Activated CD8-positive, alpha-beta T cell treated with anti-CD3 and anti-CD28 coated beads, Interleukin-2, amount 10 ng/mL, durations not matched to agents 7 days and 5 days (primary cell): ENCODE measurements at regions of chr14 and their contacts with region 1.

Region 1: DNA sequence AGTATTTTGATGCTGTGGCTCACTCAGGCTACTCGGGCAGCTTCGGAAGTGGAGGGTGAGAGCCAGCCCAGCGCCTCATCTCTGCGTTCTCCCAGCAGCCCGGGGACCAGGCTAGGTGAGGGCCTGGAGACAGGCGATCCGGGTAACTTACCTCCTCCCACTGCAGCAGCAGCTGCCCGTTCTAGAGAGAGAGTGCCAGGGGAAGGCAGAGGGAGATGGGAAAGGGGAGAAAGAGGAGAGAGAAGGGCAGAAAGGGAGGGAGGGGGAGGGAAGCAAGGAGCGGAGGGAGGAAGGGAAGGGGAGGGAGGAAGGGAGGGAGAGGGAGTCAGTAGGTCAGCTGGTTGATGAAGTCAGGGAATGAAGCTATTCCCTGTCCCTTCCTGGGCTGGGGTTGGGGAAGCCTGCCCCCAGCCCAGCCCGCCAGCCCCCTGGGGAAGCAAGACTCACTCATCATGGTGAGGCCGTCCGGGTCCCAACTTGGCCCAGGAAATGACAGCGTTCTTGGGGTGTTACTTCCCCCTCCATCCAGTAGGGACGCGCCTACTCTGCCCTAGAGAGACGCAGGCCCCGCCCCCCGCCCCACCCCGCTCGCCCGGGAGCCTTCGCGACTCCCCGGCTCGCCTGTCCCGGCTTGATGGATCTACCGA is at the start of gene IFI27L2:
- DNase-seq: peak; percentile 84
- ATAC-seq: peak; percentile 98
- H3K4me3 Mint-ChIP-seq: peak within 1 kb of the TSS; percentile 78
- H3K27ac Mint-ChIP-seq: peak within 1 kb of the TSS; percentile 88
- H3K4me1 Mint-ChIP-seq: peaks cover 17% of the 10 kb centered on the region
- H3K27me3 Mint-ChIP-seq: peaks cover 11% of the 10 kb centered on the region
- total RNA-seq, gene IFI27L2: 65.2 to 74.6 TPM

Region 2: DNA sequence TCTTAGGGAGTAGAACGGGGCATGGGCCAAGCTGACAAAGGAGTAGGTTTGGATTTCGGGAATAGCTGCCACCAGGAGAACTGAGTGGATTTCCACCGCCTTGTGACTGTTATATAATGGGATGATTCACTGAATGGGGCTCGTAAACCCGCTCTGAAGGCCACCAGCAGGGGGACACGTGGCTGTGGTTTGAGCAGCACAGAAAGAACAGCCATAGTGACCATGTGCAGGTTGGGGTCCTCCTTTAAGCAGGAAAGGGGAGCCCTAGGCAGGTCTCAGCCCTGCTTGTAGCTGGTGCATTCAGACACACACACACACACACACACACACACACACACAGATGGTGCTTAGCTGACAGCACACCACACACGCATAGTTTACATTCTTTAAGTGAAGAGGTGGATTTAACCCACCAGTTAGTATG is 144.2 kb before region 1 on chr14:
- CTCF ChIA-PET with region 1: no interaction called
- POLR2A ChIA-PET with region 1: no interaction called
- DNase-seq: no peak
- ATAC-seq: no peak
- H3K4me3 Mint-ChIP-seq: no peak overlapping the region
- H3K27ac Mint-ChIP-seq: no peak overlapping the region
- H3K4me1 Mint-ChIP-seq: peaks cover 13% of the 10 kb centered on the region
- H3K27me3 Mint-ChIP-seq: no peaks in the 10 kb centered on the region

Region 3: GRCh38 chr14:94051115-94051514 is 78.1 kb before region 1 on chr14:
- CTCF ChIA-PET with region 1: interaction called, 28 read pairs
- POLR2A ChIA-PET with region 1: no interaction called
- DNase-seq: no peak
- ATAC-seq: no peak
- H3K4me3 Mint-ChIP-seq: no peak overlapping the region
- H3K27ac Mint-ChIP-seq: peak overlapping the region; percentile 56
- H3K4me1 Mint-ChIP-seq: peaks cover 35% of the 10 kb centered on the region
- H3K27me3 Mint-ChIP-seq: no peaks in the 10 kb centered on the region

Region 4: DNA sequence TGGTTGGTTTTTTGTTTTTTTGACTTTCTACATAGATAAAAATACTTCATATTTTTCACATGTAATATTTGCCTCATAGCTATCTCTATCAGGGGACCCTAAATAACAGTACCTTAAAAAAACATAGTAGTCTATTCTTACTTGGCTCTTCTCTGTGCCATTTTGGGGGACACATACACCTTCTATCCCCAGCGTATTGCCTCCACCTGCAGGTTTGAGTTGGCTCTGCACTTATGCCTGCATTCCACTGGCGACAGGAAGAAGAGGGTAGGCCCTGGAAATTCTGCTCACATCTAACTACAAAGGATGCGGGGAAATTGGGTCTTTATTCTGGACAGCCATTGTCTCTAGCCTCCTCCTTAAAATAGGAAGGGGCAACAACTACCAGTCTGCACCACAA is 14.0 kb after region 1 on chr14:
- CTCF ChIA-PET with region 1: interaction called, 44 read pairs
- POLR2A ChIA-PET with region 1: no interaction called
- DNase-seq: peak; percentile 49
- ATAC-seq: no peak
- H3K4me3 Mint-ChIP-seq: no peak overlapping the region
- H3K27ac Mint-ChIP-seq: no peak overlapping the region
- H3K4me1 Mint-ChIP-seq: peaks cover 27% of the 10 kb centered on the region
- H3K27me3 Mint-ChIP-seq: peaks cover 11% of the 10 kb centered on the region

Region 5: GRCh38 chr14:94173885-94174603 is 44.8 kb after region 1 on chr14 and contains the start of gene PPP4R4:
- CTCF ChIA-PET with region 1: interaction called, 79 read pairs
- POLR2A ChIA-PET with region 1: no interaction called
- DNase-seq: peak; percentile 89
- ATAC-seq: peak; percentile 92
- H3K4me3 Mint-ChIP-seq: peak within 1 kb of the TSS; percentile 70
- H3K27ac Mint-ChIP-seq: peak within 1 kb of the TSS; percentile 59
- H3K4me1 Mint-ChIP-seq: peaks cover 18% of the 10 kb centered on the region
- H3K27me3 Mint-ChIP-seq: peaks cover 66% of the 10 kb centered on the region
- total RNA-seq, gene PPP4R4: 0.16 to 0.26 TPM

Region 6: GRCh38 chr14:94307410-94307992 is 178.3 kb after region 1 on chr14:
- CTCF ChIA-PET with region 1: no interaction called
- POLR2A ChIA-PET with region 1: no interaction called
- DNase-seq: no peak
- ATAC-seq: no peak
- H3K4me3 Mint-ChIP-seq: no peak overlapping the region
- H3K27ac Mint-ChIP-seq: no peak overlapping the region
- H3K4me1 Mint-ChIP-seq: no peaks in the 10 kb centered on the region
- H3K27me3 Mint-ChIP-seq: no peaks in the 10 kb centered on the region

Region 7: GRCh38 chr14:94448071-94448808 is 319.0 kb after region 1 on chr14:
- CTCF ChIA-PET with region 1: no interaction called
- POLR2A ChIA-PET with region 1: no interaction called
- DNase-seq: no peak
- ATAC-seq: no peak
- H3K4me3 Mint-ChIP-seq: no peak overlapping the region
- H3K27ac Mint-ChIP-seq: no peak overlapping the region
- H3K4me1 Mint-ChIP-seq: no peaks in the 10 kb centered on the region
- H3K27me3 Mint-ChIP-seq: peaks cover 6% of the 10 kb centered on the region